Prostate gland (tissue), 2 donors: ENCODE measurements at regions of chr15 and their contacts with region 1.

Region 1: DNA sequence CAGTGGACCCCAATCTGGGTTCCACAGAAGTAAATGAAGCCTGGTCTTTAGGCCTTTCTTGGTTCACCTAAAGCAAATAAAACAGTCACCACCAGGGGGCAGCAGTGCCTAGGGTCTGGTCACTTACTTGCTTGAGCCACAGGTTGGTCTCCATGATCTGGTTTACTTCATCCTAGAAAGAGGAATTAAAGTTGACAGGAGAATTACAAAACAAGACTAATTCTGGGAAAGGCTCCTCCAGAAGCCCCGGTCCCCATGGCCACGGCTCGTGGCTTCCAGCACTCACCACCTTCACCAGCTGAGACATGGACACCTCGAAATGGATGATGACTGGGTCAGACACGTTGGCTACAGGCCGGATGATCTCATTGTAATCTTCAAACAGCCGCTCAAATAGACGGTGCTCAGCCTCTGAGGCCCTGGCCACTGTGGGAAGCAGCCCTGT is 2.3 kb downstream of the CHRNA3 start:
- DNase-seq: peak; percentile 85
- H3K4me3 ChIP-seq: no peak overlapping the region
- H3K27ac ChIP-seq: no peak overlapping the region
- H3K4me1 ChIP-seq: no peaks in the 10 kb centered on the region
- H3K27me3 ChIP-seq: peaks cover 2% of the 10 kb centered on the region
- CTCF ChIP-seq: peak; percentile 79 to 87 (median 82)
- POLR2A ChIP-seq: no peak

Region 2: DNA sequence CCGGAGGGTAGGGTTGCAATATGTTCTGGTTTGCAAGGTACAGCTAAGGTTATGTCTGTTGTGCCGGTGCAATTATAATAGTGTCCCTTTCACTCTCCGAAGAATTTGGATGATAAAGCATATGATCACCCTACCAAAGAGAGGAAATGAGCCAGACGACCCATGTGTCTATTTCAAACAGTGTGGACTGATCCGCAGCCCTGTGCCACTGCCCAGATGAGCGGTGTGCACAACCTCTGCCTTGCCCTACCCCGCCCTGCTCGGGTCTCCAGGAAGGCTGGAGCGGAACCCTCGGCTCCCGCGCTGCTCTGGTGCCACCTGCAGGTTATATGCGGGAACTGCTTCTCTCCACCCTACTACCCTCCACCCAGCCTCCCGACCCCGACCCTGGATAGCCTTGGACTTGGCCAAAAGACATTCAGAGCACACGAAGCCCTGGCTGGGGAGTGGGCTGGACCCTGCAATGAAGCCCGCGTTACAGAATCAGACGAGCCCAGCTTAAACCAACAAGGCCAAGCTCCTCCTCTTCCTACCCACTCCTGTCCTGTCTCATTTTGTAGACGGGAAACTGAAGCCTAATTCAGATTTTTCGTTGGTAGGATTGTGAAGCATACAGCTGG is 90.9 kb after region 1 on chr15:
- intact Hi-C with region 1: loop called (anchors 1 kb)
- DNase-seq: peak; percentile 33
- H3K4me3 ChIP-seq: no peak overlapping the region
- H3K27ac ChIP-seq: no peak overlapping the region
- H3K4me1 ChIP-seq: no peaks in the 10 kb centered on the region
- H3K27me3 ChIP-seq: no peaks in the 10 kb centered on the region
- CTCF ChIP-seq: peak; percentile 71 to 85 (median 73)
- POLR2A ChIP-seq: no peak

Region 3: GRCh38 chr15:78751602-78751979 is 133.1 kb after region 1 on chr15:
- intact Hi-C with region 1: loop called (anchors 1 kb)
- DNase-seq: no peak
- H3K4me3 ChIP-seq: no peak overlapping the region
- H3K27ac ChIP-seq: no peak overlapping the region
- H3K4me1 ChIP-seq: no peaks in the 10 kb centered on the region
- H3K27me3 ChIP-seq: no peaks in the 10 kb centered on the region
- CTCF ChIP-seq: no peak
- POLR2A ChIP-seq: no peak

Region 4: GRCh38 chr15:78922527-78923414 is 304.3 kb after region 1 on chr15:
- intact Hi-C with region 1: no loop called
- DNase-seq: no peak
- H3K4me3 ChIP-seq: no peak overlapping the region
- H3K27ac ChIP-seq: peak overlapping the region; percentile 26 to 43
- H3K4me1 ChIP-seq: no peaks in the 10 kb centered on the region
- H3K27me3 ChIP-seq: no peaks in the 10 kb centered on the region
- CTCF ChIP-seq: no peak
- POLR2A ChIP-seq: no peak